Sigmoid colon (tissue), 7 donors: ENCODE measurements at regions of chrX and their contacts with region 1.

Region 1: DNA sequence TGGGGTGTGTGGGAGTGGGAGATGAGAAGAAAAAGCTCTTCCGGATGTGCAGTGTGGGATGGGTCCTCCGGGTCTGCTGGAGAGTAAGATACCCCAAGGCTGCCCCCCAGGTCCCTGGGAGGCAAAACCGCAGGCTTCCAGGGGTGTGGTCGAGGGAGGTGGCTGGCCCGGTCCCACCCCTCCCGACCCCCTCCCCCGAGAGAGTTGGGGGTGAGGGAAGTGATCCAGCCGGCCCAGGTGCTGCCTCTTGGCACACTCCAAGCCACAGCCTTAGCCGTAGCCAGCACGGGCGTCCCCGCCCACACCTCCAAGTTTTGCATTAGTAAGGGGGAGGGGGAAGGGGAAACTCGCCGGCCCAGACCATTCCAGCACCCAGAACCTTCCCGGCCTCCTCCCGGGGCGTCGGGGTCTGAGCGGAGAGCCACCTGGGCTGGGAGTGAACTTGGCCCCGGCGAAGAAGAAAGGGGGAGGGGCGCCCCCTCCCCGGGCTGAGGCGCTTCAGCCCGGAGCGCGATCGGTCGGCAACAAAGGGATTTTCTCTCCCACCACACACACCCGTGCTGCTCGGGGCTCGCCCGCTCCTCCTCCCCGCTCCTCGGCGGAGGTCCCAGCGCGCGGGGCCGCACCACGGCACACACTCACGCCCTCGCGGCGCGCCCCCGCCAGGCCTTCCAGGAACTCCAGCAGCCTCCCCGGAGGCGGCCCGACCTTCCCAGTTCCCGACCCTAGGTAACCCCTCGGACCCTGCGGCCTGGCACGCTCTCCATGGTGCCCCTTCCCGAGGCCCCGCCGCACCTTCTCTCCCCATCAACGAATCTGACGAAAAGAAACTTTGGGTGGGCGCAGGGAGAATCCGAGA is 14.4 kb downstream of the BCOR start:
- DNase-seq: no peak
- H3K4me3 ChIP-seq: peak overlapping the region; percentile 18 to 47 (median 44)
- H3K27ac ChIP-seq: peak overlapping the region in 3 of 4 donors; percentile 35 to 56 (median 37)
- H3K4me1 ChIP-seq: peaks cover 0 to 74% (median 68%) of the 10 kb centered on the region in 4 donors
- H3K27me3 ChIP-seq: no peaks in the 10 kb centered on the region
- CTCF ChIP-seq: no peak
- EP300 ChIP-seq: no peak
- POLR2A ChIP-seq: no peak

Region 2: GRCh38 chrX:39814391-39814790 is 269.0 kb before region 1 on chrX:
- intact Hi-C with region 1: loop called (anchors 10 kb)
- DNase-seq: no peak
- H3K4me3 ChIP-seq: no peak overlapping the region
- H3K27ac ChIP-seq: peak overlapping the region in 2 of 4 donors; percentile 43 to 44
- H3K4me1 ChIP-seq: peaks cover 0 to 6% (median 0%) of the 10 kb centered on the region in 4 donors
- H3K27me3 ChIP-seq: no peaks in the 10 kb centered on the region
- CTCF ChIP-seq: peak in 3 of 4 experiments; percentile 13 to 26 (median 23)
- EP300 ChIP-seq: no peak
- POLR2A ChIP-seq: no peak

Region 3: DNA sequence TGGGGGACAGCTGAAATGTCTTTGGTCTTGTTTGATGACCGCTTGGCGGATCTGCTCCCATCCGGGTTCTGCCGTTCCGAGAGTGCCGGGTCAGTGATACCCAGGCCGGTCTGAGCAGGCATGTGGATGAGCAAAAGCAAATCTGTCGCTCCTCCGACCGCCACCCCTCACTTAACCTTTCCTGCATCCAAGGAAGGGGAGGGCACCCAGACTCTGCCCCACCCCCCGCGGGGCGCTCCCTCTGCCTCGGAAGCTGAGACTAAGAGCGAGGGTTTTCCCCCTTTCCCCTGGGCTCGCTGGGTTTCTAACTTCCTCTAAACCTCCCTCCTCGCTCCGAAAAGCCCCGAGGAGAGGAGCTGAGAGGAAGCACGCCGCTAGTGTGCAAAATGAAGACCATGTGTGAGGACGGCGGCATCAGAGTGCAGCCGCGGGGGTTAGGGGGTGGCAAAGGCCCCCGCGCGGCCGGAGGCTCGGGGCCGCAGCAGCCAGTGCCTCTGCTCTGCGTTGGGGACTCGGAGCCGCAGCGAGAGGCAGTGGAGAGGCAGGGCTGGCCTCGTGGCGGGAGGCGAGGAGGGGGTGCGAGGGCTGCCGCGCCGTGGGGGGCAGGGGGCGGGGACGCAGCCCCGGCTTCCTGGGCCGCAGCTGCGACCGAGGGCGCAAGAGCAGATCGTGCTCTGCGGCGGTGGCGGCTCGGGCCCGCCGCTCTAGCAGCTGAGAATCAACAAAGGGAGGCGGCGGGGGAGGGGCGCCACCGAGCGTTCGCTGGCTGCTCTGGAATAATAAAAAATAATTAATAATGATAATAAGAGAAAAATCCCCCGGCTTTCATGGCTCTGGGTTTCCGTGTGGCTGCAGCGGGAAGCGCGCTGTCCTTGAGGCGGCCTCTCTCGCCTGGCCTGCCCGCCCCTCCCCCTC is 70.2 kb after region 1 on chrX:
- intact Hi-C with region 1: loop called (anchors 5 kb)
- DNase-seq: peak; percentile 73
- H3K4me3 ChIP-seq: peak overlapping the region; percentile 19 to 53 (median 48)
- H3K27ac ChIP-seq: peak overlapping the region; percentile 71 to 82 (median 76)
- H3K4me1 ChIP-seq: peaks cover 0 to 51% (median 16%) of the 10 kb centered on the region in 4 donors
- H3K27me3 ChIP-seq: peaks cover 0 to 14% (median 0%) of the 10 kb centered on the region in 3 donors
- CTCF ChIP-seq: no peak
- EP300 ChIP-seq: no peak
- POLR2A ChIP-seq: no peak